Transverse colon (tissue), 4 donors: ENCODE measurements at regions of chr9 and their contacts with region 1.

Region 1: DNA sequence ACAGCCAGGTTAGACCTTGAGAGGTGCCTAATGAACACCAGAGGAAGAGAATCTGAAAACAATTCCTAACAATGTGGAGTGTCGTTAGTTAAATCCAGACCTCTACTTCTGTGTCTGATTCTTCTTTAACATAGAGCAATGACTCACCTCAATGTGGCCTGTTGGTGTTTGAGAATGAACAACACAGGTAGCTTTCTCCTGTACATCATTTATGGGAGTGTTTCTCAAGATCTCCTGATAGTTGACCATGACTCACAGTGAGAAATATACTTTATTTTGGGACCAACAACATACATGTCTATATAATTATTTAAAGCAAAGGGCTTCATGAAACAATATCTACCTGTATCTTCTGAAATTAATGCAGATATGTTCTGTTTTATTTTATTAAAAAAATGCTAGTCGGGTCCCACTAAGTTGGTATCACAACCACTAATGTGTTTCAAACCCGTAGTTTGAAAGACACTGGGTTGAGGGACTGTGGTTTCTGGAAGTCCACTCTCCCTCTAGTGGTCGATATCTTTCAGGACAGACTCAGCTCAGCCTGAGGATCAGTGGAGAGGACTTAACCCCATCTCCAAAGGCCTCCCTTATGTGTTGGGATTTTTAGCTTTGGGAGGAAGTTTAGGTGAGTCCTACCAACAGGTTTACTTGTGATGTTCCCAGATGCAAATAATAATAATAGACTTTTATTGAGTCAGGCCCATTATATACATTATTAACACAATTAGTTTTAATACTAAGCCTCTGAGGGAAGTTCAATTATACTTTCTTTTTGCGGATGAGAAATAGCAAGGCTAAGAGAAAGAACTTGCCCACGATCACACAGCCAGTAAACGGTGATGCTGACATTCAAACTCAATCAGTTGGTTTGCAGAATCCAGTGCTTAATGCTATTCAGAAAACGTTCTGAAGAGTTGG is 70.0 kb upstream of the KLF9 start:
- DNase-seq: peak; percentile 42
- H3K4me3 ChIP-seq: no peak overlapping the region
- H3K27ac ChIP-seq: peak overlapping the region; percentile 58 to 94 (median 92)
- H3K4me1 ChIP-seq: peaks cover 21 to 70% (median 55%) of the 10 kb centered on the region in 4 donors
- H3K27me3 ChIP-seq: no peaks in the 10 kb centered on the region
- CTCF ChIP-seq: peak; percentile 75 to 93 (median 84)
- EP300 ChIP-seq: no peak
- POLR2A ChIP-seq: no peak

Region 2: DNA sequence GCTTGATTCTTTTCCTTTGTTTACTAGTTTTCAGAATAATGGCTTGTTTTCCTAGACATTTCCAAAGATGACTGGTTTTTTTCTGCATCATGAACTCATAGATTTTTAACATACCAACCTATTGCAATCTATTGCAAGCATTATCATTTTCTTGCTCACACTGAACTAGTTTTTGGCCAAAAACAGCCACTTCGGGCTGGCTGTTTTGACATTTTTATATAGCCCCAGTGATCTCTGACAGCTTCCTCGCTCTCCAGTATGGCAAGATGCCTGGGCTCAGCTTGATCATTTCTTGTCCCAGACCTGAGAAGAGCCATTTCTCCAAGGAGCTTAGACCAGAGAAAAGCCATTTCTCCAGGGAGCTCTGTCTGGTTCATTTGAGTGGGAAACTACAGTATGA is 535.1 kb before region 1 on chr9:
- in situ Hi-C with region 1: no loop called
- intact Hi-C with region 1: no loop called
- DNase-seq: no peak
- H3K4me3 ChIP-seq: no peak overlapping the region
- H3K27ac ChIP-seq: no peak overlapping the region
- H3K4me1 ChIP-seq: no peaks in the 10 kb centered on the region
- H3K27me3 ChIP-seq: no peaks in the 10 kb centered on the region
- CTCF ChIP-seq: no peak
- EP300 ChIP-seq: no peak
- POLR2A ChIP-seq: no peak

Region 3: DNA sequence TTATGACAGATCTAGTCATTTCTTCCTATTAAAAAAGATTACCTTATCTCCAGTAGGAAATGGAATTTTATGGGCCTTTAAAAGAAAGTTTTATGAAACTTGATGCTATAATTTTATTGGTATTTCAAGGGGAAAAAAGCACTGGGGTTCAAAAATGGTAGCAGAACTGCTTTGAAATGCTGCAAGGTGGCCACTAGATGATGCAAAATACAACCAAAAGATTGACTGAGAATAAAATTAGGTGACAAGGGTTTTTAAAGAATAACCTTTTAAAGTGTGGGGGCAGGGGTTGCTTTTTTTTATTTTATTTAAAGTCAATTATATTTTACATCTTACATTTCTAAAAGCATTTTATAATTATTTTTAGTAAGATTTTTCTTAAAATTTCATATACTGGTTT is 131.7 kb before region 1 on chr9:
- in situ Hi-C with region 1: loop called in 2 of 4 experiments (anchors 10 to 25 kb)
- intact Hi-C with region 1: no loop called
- DNase-seq: no peak
- H3K4me3 ChIP-seq: no peak overlapping the region
- H3K27ac ChIP-seq: peak overlapping the region in 2 of 4 donors; percentile 23 to 28
- H3K4me1 ChIP-seq: peaks cover 0 to 9% (median 0%) of the 10 kb centered on the region in 4 donors
- H3K27me3 ChIP-seq: no peaks in the 10 kb centered on the region
- CTCF ChIP-seq: peak; percentile 59 to 77 (median 68)
- EP300 ChIP-seq: no peak
- POLR2A ChIP-seq: no peak

Region 4: DNA sequence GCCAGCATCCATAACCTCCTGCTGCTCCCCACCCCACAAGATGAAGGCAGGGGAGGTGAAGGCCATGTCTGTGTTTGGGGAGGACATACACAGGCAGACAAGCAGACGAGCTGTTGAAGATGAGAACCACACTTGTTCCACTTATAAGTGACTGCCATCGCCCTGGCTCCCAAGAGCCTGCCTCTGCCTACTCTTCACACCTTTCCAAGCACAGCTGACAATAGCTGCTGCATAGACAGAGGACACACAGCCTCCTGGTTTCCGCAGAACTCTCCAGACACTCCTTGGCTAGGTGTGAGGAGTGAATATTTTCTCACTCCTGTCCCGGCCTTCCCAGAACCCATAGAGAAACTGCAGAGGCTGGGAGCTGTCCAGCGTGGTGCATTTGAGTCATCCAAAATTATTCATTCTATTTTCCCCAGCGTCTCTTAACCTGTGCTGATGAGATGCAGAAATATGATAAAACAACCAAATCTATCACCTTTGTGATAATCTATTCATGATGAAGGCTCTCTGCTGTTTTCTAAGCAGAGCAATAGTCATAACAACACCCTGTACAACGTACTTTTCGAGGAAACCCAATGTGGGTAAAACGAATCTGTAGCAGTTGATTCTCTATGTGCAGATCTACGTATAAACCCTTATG is 94.7 kb before region 1 on chr9:
- in situ Hi-C with region 1: no loop called
- intact Hi-C with region 1: no loop called
- DNase-seq: no peak
- H3K4me3 ChIP-seq: no peak overlapping the region
- H3K27ac ChIP-seq: peak overlapping the region in 3 of 4 donors; percentile 11 to 76 (median 30)
- H3K4me1 ChIP-seq: peaks cover 20 to 66% (median 41%) of the 10 kb centered on the region in 4 donors
- H3K27me3 ChIP-seq: no peaks in the 10 kb centered on the region
- CTCF ChIP-seq: no peak
- EP300 ChIP-seq: no peak
- POLR2A ChIP-seq: no peak

Region 5: GRCh38 chr9:70413798-70414775 is 70.4 kb before region 1 on chr9 and contains the start of gene KLF9:
- in situ Hi-C with region 1: loop called in 3 of 4 experiments (anchors 5 to 10 kb)
- intact Hi-C with region 1: no loop called
- DNase-seq: peak; percentile 95
- H3K4me3 ChIP-seq: peak within 1 kb of the TSS; percentile 89 to 96 (median 92)
- H3K27ac ChIP-seq: peak within 1 kb of the TSS; percentile 99 to 100 (median 100)
- H3K4me1 ChIP-seq: peaks cover 21 to 59% (median 44%) of the 10 kb centered on the region in 4 donors
- H3K27me3 ChIP-seq: no peaks in the 10 kb centered on the region
- CTCF ChIP-seq: peak in 1 of 5 experiments; percentile 4
- EP300 ChIP-seq: peak; percentile 91
- POLR2A ChIP-seq: peak; percentile 99
- total RNA-seq, gene KLF9: 60.3 to 111 (median 82.9) TPM

Region 6: DNA sequence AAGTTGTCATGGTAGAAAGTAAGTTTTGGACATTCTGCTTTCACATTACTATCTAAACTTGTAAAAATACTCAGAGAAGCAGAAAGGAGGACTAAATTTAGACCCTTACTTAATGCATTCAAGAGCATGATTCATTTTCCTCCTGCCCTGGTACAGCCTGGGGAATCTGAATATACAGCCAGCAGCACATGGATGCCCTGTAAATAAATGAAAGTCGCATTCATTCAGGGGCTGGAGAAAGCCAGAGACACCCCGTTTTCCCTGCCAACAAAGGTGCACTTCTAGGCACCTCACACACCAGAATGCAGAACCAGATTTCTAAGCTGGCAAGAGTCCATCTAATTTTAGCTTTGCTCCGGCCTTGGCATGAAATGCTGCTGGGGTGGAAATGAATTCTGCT is 102.7 kb after region 1 on chr9:
- in situ Hi-C with region 1: loop called in 2 of 4 experiments (anchors 10 kb)
- intact Hi-C with region 1: no loop called
- DNase-seq: no peak
- H3K4me3 ChIP-seq: no peak overlapping the region
- H3K27ac ChIP-seq: peak overlapping the region; percentile 74 to 84 (median 82)
- H3K4me1 ChIP-seq: peaks cover 14 to 27% (median 17%) of the 10 kb centered on the region in 4 donors
- H3K27me3 ChIP-seq: no peaks in the 10 kb centered on the region
- CTCF ChIP-seq: no peak
- EP300 ChIP-seq: no peak
- POLR2A ChIP-seq: no peak